ENCODE measurements at regions of chr16 and their contacts with region 1.

Region 1: GRCh38 chr16:29700253-29700987 is 21.4 kb downstream of the QPRT start:
- DNase-seq: peak; percentile 92
- H3K4me3 Mint-ChIP-seq: peak overlapping the region; percentile 47
- H3K27ac Mint-ChIP-seq: peak overlapping the region; percentile 81
- H3K4me1 Mint-ChIP-seq: peaks cover 35% of the 10 kb centered on the region
- H3K27me3 Mint-ChIP-seq: no peaks in the 10 kb centered on the region

Region 2: DNA sequence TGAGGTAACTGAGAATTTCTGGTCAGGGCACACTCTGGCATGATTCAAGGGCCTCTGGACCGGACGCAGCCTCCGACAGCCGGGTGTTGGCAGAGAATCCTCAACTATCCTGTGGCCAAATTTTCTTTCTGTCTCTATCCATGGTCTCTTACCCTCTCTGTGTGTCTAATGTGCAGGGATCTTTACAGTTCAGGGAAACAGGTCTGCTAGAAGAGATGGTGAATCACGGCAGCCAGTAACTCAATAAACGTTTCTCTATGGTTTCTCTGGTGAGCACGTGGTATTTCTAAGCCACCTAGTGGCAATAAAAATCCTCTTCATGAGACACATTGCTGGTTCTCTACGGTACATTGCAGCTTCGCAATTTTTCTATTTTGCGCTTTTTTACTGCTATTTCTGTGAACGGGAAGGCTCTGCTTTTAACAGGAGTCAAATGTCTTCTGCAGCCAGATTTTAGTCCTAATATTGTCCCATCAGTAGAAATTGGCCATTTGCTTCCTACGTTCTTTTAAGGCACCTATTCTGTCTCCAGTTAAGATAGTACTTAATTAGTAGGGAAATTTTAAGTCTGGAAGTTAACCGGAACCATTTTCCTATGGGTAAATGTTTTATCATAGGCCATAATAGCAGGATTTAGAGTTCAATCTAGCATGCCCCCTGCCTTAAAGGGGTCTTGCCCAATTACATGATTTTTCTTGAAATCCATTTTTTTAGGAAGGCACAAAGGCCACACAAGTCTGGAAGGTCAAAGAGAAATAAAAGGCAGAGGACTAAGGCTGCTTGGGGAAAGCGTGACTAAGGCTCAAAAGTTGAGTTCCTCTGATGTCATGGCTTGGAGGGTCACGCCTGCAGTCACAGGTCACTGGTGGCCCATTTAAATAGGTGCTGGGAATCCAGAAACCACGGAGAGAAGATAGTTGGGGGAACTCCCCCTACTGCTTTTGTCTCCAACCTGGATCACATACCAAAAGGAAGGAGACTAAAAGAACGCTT is 10.1 kb after region 1 on chr16:
- intact Hi-C with region 1: loop called (anchors 1 kb)
- DNase-seq: peak; percentile 86
- H3K4me3 Mint-ChIP-seq: no peak overlapping the region
- H3K27ac Mint-ChIP-seq: no peak overlapping the region
- H3K4me1 Mint-ChIP-seq: peaks cover 10% of the 10 kb centered on the region
- H3K27me3 Mint-ChIP-seq: peaks cover 16% of the 10 kb centered on the region

Region 3: DNA sequence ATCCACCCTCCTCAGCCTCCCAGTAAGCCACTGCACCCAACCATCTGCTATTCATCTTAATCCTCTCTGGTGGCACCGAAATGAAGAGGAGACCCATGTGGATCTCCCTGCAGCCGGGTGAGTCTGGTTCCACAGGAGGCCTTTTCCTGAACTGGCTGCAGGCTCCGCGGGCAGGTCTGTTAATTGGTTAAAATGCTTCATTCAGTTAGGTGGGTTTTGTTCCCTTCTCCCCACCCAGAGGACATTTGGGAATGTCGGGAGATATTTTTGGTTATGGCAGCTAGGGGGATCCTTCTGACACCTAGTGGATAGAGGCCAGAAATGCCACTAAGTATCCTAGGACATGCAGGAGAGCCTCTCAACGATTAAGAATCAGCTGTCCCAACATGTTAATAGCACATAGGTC is 28.7 kb after region 1 on chr16:
- intact Hi-C with region 1: loop called (anchors 1 kb)
- DNase-seq: no peak
- H3K4me3 Mint-ChIP-seq: no peak overlapping the region
- H3K27ac Mint-ChIP-seq: no peak overlapping the region
- H3K4me1 Mint-ChIP-seq: peaks cover 26% of the 10 kb centered on the region
- H3K27me3 Mint-ChIP-seq: peaks cover 18% of the 10 kb centered on the region

Region 4: DNA sequence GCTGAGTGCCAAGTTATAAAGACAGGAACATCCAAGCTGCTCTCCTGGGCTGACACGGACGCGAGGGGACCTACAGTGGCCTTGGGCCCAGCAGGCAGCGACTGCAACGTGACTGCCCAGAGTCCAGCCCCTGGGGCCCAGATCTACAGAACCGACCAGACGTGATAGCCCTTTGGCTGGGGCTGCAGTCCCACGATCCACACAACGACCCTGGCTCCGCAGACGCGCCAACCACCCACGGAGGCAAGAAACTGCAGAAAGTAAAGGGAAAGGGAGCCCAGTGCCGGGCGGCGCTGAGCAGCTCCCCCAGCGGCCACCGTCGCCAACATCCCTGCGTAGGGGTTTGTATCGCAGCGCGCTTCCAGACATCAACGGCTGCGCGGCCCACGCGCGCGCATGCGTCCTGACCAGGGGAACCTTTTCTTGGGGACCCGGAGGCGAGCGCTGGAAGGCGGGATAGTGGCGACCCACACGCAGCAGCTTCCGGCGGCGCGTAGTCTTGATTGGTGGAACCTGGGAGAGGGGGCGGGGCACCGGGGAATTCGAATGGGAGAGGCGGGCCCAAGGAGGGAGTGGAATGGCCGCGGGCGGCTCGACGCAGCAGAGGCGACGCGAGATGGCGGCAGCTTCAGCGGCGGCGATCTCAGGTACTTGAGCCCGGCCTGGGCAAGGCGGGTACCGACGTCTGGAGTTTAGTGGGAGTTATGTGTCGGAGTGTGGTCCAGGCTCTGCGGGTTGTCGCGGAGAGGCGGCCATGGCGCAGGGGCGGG is 89.9 kb after region 1 on chr16 and contains the start of gene KIF22:
- intact Hi-C with region 1: loop called (anchors 2 kb)
- DNase-seq: peak; percentile 100
- H3K4me3 Mint-ChIP-seq: peak within 1 kb of the TSS; percentile 99
- H3K27ac Mint-ChIP-seq: peak within 1 kb of the TSS; percentile 95
- H3K4me1 Mint-ChIP-seq: peaks cover 37% of the 10 kb centered on the region
- H3K27me3 Mint-ChIP-seq: no peaks in the 10 kb centered on the region
- total RNA-seq, gene KIF22: 132 TPM in 2 replicates

Region 5: GRCh38 chr16:29848420-29849297 is 148.2 kb after region 1 on chr16:
- intact Hi-C with region 1: loop called (anchors 1 kb)
- DNase-seq: peak; percentile 95
- H3K4me3 Mint-ChIP-seq: no peak overlapping the region
- H3K27ac Mint-ChIP-seq: no peak overlapping the region
- H3K4me1 Mint-ChIP-seq: peaks cover 2% of the 10 kb centered on the region
- H3K27me3 Mint-ChIP-seq: no peaks in the 10 kb centered on the region